CD4-positive, alpha-beta memory T cell (primary cell): ENCODE measurements at regions of chr10 and their contacts with region 1.

Region 1: DNA sequence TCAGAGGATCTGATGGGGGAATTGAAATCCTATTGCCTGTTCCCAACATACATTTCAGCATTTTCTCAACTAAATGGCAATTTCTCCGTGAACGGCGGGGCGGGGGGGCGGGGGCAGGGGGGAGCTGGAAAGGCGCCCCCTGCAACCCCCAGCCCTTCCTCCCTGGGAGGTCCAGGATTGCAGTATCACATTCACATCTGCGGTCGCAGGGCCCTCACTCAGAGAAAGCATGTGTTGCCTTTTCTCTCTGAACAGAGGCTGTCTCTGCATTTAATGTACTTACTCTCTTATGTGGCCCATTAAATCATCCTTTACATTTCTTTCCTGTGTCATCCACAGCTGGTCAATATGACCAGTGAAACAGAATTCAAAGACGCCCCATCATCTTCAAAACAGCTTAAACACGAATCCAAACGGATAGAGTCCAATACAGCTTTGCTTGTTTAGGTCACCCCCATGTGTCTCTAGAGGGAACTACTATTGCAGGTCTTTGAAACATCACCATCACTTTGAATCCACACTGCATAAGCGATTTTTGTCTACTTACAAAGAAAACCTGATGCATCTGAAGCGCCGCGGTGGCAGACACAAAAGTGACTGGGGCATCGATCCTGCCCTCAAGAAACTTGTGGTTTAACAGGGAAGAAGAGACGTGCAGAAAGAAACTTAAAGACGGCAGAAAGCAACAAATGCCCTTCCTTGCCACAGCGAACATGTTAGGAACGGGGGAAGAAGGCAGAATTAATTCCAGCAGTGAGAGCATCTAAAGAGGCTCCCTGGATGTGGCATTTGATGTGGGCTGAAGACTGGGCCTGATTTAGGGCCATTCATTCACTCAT is 17.0 kb upstream of the ECHDC3 start:
- DNase-seq: peak in 4 of 5 donors; percentile 31 to 45 (median 35)
- H3K4me3 ChIP-seq: no peak overlapping the region
- H3K4me3 Mint-ChIP-seq: no peak overlapping the region
- H3K27ac ChIP-seq: no peak overlapping the region
- H3K27ac Mint-ChIP-seq: no peak overlapping the region
- H3K4me1 ChIP-seq: no peaks in the 10 kb centered on the region
- H3K4me1 Mint-ChIP-seq: peaks cover 0 to 5% (median 2%) of the 10 kb centered on the region in 4 donors
- H3K27me3 ChIP-seq: no peaks in the 10 kb centered on the region
- H3K27me3 Mint-ChIP-seq: peaks cover 5 to 6% of the 10 kb centered on the region in 2 donors

Region 2: DNA sequence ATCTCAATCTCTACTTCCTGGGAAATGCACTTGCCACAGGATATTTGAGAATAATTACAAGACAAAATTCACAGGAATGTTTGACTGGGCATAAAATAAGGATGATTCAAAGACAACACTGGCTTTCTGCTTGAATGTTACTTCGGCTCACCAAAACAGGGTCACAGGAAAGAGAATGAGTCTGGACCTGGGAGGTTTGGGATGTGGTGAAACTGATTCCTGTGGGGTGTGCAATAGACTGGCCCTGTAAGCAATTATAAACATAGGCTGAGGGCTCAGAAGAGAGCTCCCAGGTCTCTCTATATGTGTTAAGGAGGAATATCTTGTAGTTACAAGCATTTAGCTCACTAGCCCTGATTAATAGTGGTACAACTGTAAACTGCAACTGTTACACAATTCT is 1321.4 kb before region 1 on chr10:
- CTCF ChIA-PET with region 1: no interaction called
- POLR2A ChIA-PET with region 1: no interaction called
- intact Hi-C with region 1: no loop called
- DNase-seq: no peak
- H3K4me3 ChIP-seq: no peak overlapping the region
- H3K4me3 Mint-ChIP-seq: no peak overlapping the region
- H3K27ac ChIP-seq: no peak overlapping the region
- H3K27ac Mint-ChIP-seq: no peak overlapping the region
- H3K4me1 ChIP-seq: no peaks in the 10 kb centered on the region
- H3K4me1 Mint-ChIP-seq: no peaks in the 10 kb centered on the region
- H3K27me3 ChIP-seq: no peaks in the 10 kb centered on the region
- H3K27me3 Mint-ChIP-seq: peaks cover 2 to 8% of the 10 kb centered on the region in 2 donors

Region 3: DNA sequence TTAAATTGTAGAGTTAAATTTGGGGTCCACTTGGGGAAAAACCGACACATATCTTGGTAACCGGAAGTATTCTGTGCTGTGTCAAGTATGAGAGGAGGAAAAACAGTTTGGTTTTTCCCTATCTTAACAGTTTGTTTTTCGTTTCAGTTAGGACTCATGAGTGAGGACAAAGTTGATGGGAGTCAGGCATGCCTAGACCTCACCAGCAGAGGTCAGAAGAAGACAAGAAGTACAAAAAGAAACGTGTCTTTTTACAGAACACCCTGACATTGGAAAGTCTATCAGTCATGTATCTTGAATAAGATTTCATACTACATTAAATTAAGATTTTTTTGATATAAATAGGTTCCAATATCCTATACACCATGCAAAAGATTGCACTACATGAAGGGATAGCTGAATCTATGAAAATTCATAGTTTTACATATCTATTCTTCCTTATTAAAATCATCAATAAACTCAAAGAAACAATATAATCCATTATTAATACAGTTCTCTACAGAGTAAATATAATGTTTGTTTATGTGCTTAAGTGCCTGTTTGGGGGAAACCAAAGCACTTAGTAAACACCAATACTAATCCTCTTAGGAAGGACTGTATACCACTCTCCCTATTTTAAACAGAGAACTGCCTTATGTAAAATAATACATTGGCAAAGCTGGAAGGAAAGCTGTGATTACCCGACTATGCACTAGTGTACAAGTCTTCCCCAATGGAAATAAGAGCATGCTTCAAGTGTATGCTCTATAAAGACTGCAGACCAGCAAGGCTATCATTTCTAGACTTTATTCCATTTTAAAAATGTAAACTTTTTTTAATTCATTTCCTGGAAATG is 209.3 kb before region 1 on chr10:
- CTCF ChIA-PET with region 1: interaction called, 30 read pairs
- POLR2A ChIA-PET with region 1: no interaction called
- intact Hi-C with region 1: no loop called
- DNase-seq: peak; percentile 43 to 60 (median 58)
- H3K4me3 ChIP-seq: no peak overlapping the region
- H3K4me3 Mint-ChIP-seq: no peak overlapping the region
- H3K27ac ChIP-seq: no peak overlapping the region
- H3K27ac Mint-ChIP-seq: no peak overlapping the region
- H3K4me1 ChIP-seq: no peaks in the 10 kb centered on the region
- H3K4me1 Mint-ChIP-seq: peaks cover 2 to 4% (median 3%) of the 10 kb centered on the region in 4 donors
- H3K27me3 ChIP-seq: no peaks in the 10 kb centered on the region
- H3K27me3 Mint-ChIP-seq: peaks cover 0 to 2% of the 10 kb centered on the region in 2 donors